ENCODE measurements at regions of chr1 and their contacts with region 1.

Region 1: GRCh38 chr1:173202430-173203145 is 4.5 kb downstream of the TNFSF4 start:
- DNase-seq: peak; percentile 52
- ATAC-seq: no peak
- H3K4me3 Mint-ChIP-seq: no peak overlapping the region
- H3K27ac Mint-ChIP-seq: no peak overlapping the region
- H3K4me1 Mint-ChIP-seq: peaks cover 50% of the 10 kb centered on the region
- H3K27me3 Mint-ChIP-seq: peaks cover 2% of the 10 kb centered on the region

Region 2: GRCh38 chr1:172818841-172819527 is 383.6 kb before region 1 on chr1:
- CTCF ChIA-PET with region 1: interaction called, 108 read pairs
- POLR2A ChIA-PET with region 1: no interaction called
- DNase-seq: peak; percentile 60
- ATAC-seq: peak; percentile 80
- H3K4me3 Mint-ChIP-seq: peak overlapping the region; percentile 53
- H3K27ac Mint-ChIP-seq: peak overlapping the region; percentile 93
- H3K4me1 Mint-ChIP-seq: peaks cover 49% of the 10 kb centered on the region
- H3K27me3 Mint-ChIP-seq: no peaks in the 10 kb centered on the region

Region 3: DNA sequence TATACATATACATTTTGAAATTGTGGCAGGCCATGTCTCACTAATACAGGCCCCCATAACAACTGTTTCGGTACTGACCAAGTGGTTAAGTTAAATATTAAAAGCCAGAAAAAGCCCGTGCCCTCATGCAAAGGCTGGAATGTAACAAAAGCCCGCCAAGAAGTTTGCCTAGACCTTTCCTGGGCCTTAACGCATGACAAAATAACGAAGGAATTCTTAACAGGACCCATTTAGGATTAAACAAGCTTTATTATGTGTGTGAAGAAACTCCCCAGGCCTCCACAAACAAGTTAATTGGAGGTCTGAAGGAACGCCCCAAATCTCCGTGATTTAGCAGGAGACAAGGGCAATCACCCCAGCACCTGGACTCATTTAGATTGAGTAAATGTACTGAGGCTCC is 37.9 kb before region 1 on chr1:
- CTCF ChIA-PET with region 1: no interaction called
- POLR2A ChIA-PET with region 1: no interaction called
- DNase-seq: no peak
- ATAC-seq: no peak
- H3K4me3 Mint-ChIP-seq: no peak overlapping the region
- H3K27ac Mint-ChIP-seq: no peak overlapping the region
- H3K4me1 Mint-ChIP-seq: peaks cover 7% of the 10 kb centered on the region
- H3K27me3 Mint-ChIP-seq: no peaks in the 10 kb centered on the region

Region 4: DNA sequence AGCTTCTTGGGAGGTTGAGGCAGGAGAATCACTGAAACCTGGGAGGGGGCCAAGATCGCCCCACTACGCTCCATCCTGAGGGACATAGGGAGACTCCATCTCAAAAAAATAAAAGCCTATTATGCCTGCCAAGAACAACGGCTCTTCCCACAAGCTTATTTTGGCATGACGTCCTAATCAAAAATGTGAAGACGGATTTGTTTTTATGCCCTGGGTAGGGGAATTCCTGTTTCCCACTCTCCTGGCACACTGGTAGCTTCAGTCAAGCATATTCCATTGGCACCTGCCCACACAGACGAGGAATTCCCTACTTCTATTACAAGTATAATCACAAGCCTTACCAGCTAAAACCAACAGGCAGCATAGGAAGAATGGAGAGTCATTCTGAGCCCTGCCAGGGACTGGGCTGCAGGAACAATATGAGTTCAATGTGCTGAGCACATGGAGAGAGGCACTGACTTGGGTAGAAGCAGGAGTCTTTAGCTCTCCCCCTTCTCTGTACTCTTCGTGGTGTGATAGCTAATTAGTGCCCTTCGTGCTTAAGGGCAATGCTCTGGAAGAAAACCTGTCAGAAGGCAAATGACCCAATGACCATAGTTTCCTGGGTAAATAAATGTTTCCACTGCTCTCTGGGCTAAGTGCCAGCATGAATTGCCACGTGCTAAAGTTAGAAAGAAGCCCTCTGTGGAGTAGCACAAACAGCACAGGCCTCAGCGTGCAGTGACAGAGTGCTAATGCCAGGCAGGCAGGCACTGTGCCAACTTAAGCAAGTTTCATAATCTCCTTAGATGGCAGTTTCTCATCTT is 12.3 kb before region 1 on chr1:
- CTCF ChIA-PET with region 1: interaction called, 11 read pairs
- POLR2A ChIA-PET with region 1: no interaction called
- DNase-seq: no peak
- ATAC-seq: no peak
- H3K4me3 Mint-ChIP-seq: no peak overlapping the region
- H3K27ac Mint-ChIP-seq: no peak overlapping the region
- H3K4me1 Mint-ChIP-seq: peaks cover 15% of the 10 kb centered on the region
- H3K27me3 Mint-ChIP-seq: no peaks in the 10 kb centered on the region